ENCODE measurements at regions of chr6 and their contacts with region 1.

Region 1: GRCh38 chr6:29649701-29650673 is 6.9 kb upstream of the MOG start:
- DNase-seq: peak; percentile 99
- H3K27ac ChIP-seq: peak overlapping the region; percentile 83
- CTCF ChIP-seq: peak; percentile 93

Region 2: GRCh38 chr6:29632789-29633533 is 17.0 kb before region 1 on chr6 and contains the start of gene GABBR1:
- CTCF ChIA-PET with region 1: interaction called, 10 read pairs
- POLR2A ChIA-PET with region 1: no interaction called
- DNase-seq: peak; percentile 97
- H3K27ac ChIP-seq: peak within 1 kb of the TSS; percentile 77
- CTCF ChIP-seq: no peak

Region 3: GRCh38 chr6:29665942-29666825 is 16.2 kb after region 1 on chr6:
- CTCF ChIA-PET with region 1: interaction called, 19 read pairs
- POLR2A ChIA-PET with region 1: interaction called, 3 read pairs
- DNase-seq: no peak
- H3K27ac ChIP-seq: no peak overlapping the region
- CTCF ChIP-seq: no peak

Region 4: GRCh38 chr6:29676981-29677601 is 27.1 kb after region 1 on chr6:
- CTCF ChIA-PET with region 1: interaction called, 21 read pairs
- POLR2A ChIA-PET with region 1: interaction called, 3 read pairs
- DNase-seq: peak; percentile 20
- H3K27ac ChIP-seq: peak overlapping the region; percentile 75
- CTCF ChIP-seq: no peak

Region 5: DNA sequence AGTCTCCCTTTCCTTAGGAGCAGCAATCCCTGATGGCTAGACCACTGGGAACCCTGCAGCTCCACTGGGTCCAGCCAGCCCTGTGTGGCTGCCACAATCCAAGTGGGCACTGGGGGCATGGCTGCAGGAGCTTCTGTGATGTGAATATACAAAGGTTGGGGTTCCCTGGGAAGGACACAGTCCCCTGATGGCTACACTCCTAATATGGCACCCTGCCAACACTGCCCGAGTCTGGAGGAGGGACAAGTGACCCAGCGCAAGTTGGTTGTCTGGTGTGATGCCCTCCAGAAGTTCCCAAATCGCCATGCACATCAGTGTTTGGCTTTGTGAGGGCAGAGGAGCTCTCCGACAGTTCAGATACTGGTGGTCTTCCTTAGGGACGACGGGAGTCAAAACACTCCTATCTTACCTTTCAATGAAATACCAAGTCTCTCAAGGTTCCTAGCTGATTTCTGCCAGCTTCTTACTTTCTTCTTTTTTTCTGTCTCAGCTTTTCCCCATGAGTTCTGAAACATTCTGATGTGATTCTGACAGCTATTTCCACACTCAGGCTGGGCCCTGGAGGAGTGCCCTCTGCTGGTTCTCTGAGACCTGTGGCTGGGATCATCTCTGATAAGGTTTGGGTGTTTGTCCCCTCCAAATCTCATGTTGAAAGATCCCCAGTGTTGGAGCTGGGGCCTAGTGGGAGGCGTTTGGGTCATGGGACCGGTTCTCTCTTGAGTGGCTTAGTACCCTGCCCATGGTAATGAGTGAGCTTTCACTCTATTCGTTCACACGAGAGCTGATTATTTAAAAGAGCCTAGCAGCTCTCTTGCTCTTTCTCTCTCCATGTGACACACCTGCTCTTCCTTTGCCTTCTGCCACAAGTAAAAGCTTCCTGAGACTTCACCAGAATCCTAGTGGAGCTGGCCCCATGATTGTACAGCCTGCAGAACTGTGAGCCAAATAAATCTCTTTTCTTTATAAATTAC is 46.5 kb after region 1 on chr6:
- CTCF ChIA-PET with region 1: interaction called, 56 read pairs
- POLR2A ChIA-PET with region 1: interaction called, 3 read pairs
- DNase-seq: peak; percentile 55
- H3K27ac ChIP-seq: no peak overlapping the region
- CTCF ChIP-seq: peak; percentile 54

Region 6: GRCh38 chr6:29737707-29738630 is 88.0 kb after region 1 on chr6:
- CTCF ChIA-PET with region 1: interaction called, 10 read pairs
- POLR2A ChIA-PET with region 1: no interaction called
- DNase-seq: peak; percentile 57
- H3K27ac ChIP-seq: no peak overlapping the region
- CTCF ChIP-seq: peak; percentile 74

Region 7: GRCh38 chr6:29847871-29848630 is 198.1 kb after region 1 on chr6:
- CTCF ChIA-PET with region 1: interaction called, 11 read pairs
- POLR2A ChIA-PET with region 1: no interaction called
- DNase-seq: peak; percentile 77
- H3K27ac ChIP-seq: no peak overlapping the region
- CTCF ChIP-seq: peak; percentile 86

Measured in RWPE1 (cell line).